ENCODE measurements at regions of chr21 and their contacts with region 1.

Region 1: GRCh38 chr21:36297921-36298594 is 21.9 kb upstream of the MORC3 start:
- DNase-seq: peak; percentile 35 to 89 (median 87)
- ATAC-seq: peak; percentile 99
- H3K4me3 ChIP-seq: peak overlapping the region; percentile 52
- H3K4me3 Mint-ChIP-seq: peak overlapping the region; percentile 71 to 88 (median 84)
- H3K27ac ChIP-seq: peak overlapping the region; percentile 84
- H3K27ac Mint-ChIP-seq: peak overlapping the region; percentile 91 to 100 (median 98)
- H3K4me1 ChIP-seq: peaks cover 21 to 36% of the 10 kb centered on the region in 2 donors
- H3K4me1 Mint-ChIP-seq: peaks cover 24 to 53% (median 40%) of the 10 kb centered on the region in 7 donors
- H3K27me3 ChIP-seq: no peaks in the 10 kb centered on the region
- H3K27me3 Mint-ChIP-seq: no peaks in the 10 kb centered on the region

Region 2: GRCh38 chr21:35896060-35896459 is 402.0 kb before region 1 on chr21:
- CTCF ChIA-PET with region 1: no interaction called
- POLR2A ChIA-PET with region 1: no interaction called
- intact Hi-C with region 1: no loop called
- DNase-seq: no peak
- ATAC-seq: no peak
- H3K4me3 ChIP-seq: no peak overlapping the region
- H3K4me3 Mint-ChIP-seq: no peak overlapping the region
- H3K27ac ChIP-seq: no peak overlapping the region
- H3K27ac Mint-ChIP-seq: no peak overlapping the region
- H3K4me1 ChIP-seq: no peaks in the 10 kb centered on the region
- H3K4me1 Mint-ChIP-seq: peaks cover 0 to 2% (median 0%) of the 10 kb centered on the region in 7 donors
- H3K27me3 ChIP-seq: peaks cover 0 to 3% of the 10 kb centered on the region in 2 donors
- H3K27me3 Mint-ChIP-seq: peaks cover 0 to 16% (median 11%) of the 10 kb centered on the region in 5 donors

Region 3: DNA sequence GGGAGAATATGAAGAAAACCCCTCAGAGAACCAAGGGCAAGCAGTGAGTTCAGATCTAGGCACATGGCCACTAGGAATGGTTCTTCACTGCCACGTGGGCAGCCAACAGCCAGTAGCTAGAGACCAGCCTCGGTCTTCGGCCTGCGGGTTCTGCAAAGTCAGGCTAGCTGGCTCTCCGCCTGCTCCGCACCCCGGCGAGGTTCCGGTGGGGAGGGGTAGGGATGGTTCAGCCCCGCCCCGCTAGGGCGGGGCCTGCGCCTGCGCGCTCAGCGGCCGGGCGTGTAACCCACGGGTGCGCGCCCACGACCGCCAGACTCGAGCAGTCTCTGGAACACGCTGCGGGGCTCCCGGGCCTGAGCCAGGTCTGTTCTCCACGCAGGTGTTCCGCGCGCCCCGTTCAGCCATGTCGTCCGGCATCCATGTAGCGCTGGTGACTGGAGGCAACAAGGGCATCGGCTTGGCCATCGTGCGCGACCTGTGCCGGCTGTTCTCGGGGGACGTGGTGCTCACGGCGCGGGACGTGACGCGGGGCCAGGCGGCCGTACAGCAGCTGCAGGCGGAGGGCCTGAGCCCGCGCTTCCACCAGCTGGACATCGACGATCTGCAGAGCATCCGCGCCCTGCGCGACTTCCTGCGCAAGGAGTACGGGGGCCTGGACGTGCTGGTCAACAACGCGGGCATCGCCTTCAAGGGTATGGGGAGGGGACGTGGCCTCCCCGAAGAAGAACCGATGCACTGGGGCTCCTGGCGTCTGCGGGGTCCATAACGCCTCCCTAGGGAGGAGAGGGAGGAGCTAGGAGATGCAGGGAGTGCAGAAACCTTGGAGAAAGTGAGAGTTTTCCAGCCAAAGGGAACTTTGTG is 228.1 kb before region 1 on chr21 and contains the start of gene CBR1:
- CTCF ChIA-PET with region 1: no interaction called
- POLR2A ChIA-PET with region 1: interaction called, 6 read pairs
- intact Hi-C with region 1: loop called in 1 of 2 experiments (anchors 1 kb)
- DNase-seq: peak; percentile 62 to 90 (median 84)
- ATAC-seq: peak; percentile 98
- H3K4me3 ChIP-seq: peak within 1 kb of the TSS; percentile 73
- H3K4me3 Mint-ChIP-seq: peak within 1 kb of the TSS; percentile 83 to 93 (median 90)
- H3K27ac ChIP-seq: peak within 1 kb of the TSS; percentile 65
- H3K27ac Mint-ChIP-seq: peak within 1 kb of the TSS; percentile 63 to 93 (median 82)
- H3K4me1 ChIP-seq: peaks cover 5 to 21% of the 10 kb centered on the region in 2 donors
- H3K4me1 Mint-ChIP-seq: peaks cover 12 to 47% (median 41%) of the 10 kb centered on the region in 7 donors
- H3K27me3 ChIP-seq: no peaks in the 10 kb centered on the region
- H3K27me3 Mint-ChIP-seq: no peaks in the 10 kb centered on the region
- total RNA-seq, gene CBR1: 6.0 to 51.1 (median 22.1) TPM

Region 4: DNA sequence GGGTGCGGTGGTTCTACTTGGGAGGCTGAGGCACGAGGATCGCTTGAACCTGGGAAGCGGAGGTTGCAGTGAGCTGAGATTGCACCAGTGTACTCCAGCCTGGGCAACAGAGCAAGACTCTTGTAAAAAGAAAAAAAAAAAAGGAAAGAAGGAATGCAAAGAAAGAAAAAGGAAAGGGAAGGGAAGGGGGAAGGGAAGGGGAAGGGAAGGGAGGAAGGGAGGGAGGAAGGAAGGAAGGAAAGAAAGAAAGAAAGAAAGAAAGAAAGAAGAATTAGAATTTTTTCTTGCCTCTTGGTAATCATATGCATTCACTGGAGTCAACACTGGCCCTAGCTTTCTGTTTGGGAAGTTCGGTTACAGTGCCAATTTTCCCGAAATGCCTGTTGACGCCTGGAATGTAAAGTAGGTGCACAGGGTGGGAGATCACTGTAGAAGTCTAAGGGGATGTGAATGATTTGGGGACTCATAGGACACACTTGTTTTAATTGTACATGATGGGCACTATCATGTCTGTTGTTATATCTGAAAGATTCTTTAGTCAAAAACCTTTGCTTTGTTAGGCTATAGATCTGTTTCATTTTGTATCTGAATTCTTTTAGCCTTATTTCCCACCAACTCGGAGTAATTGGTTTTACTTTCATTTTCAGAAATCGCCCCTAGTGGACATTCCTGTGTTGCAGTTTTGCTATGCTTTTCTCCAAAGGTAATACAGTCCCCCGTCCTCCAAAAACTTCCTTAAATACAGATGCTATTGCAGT is 37.8 kb before region 1 on chr21:
- CTCF ChIA-PET with region 1: interaction called, 4 read pairs
- POLR2A ChIA-PET with region 1: interaction called, 8 read pairs
- intact Hi-C with region 1: loop called in 1 of 2 experiments (anchors 1 kb)
- DNase-seq: peak in 7 of 9 donors; percentile 54 to 76 (median 68)
- ATAC-seq: peak; percentile 88
- H3K4me3 ChIP-seq: peak overlapping the region; percentile 57
- H3K4me3 Mint-ChIP-seq: peak overlapping the region; percentile 81 to 91 (median 86)
- H3K27ac ChIP-seq: peak overlapping the region; percentile 76
- H3K27ac Mint-ChIP-seq: peak overlapping the region; percentile 89 to 97 (median 93)
- H3K4me1 ChIP-seq: peaks cover 0 to 6% of the 10 kb centered on the region in 2 donors
- H3K4me1 Mint-ChIP-seq: peaks cover 9 to 24% (median 18%) of the 10 kb centered on the region in 7 donors
- H3K27me3 ChIP-seq: no peaks in the 10 kb centered on the region
- H3K27me3 Mint-ChIP-seq: no peaks in the 10 kb centered on the region

Region 5: GRCh38 chr21:36310016-36310415 is 12.0 kb after region 1 on chr21:
- CTCF ChIA-PET with region 1: interaction called, 4 read pairs
- POLR2A ChIA-PET with region 1: interaction called, 361 read pairs
- intact Hi-C with region 1: loop called (anchors 1 kb)
- DNase-seq: peak in 1 of 9 donors; percentile 25
- ATAC-seq: peak; percentile 83
- H3K4me3 ChIP-seq: no peak overlapping the region
- H3K4me3 Mint-ChIP-seq: peak overlapping the region in 5 of 10 donors; percentile 16 to 49 (median 42)
- H3K27ac ChIP-seq: no peak overlapping the region
- H3K27ac Mint-ChIP-seq: peak overlapping the region in 7 of 9 donors; percentile 32 to 71 (median 60)
- H3K4me1 ChIP-seq: no peaks in the 10 kb centered on the region
- H3K4me1 Mint-ChIP-seq: peaks cover 0 to 9% (median 4%) of the 10 kb centered on the region in 7 donors
- H3K27me3 ChIP-seq: no peaks in the 10 kb centered on the region
- H3K27me3 Mint-ChIP-seq: peaks cover 0 to 2% (median 0%) of the 10 kb centered on the region in 5 donors

Region 6: GRCh38 chr21:36735724-36736325 is 437.8 kb after region 1 on chr21:
- CTCF ChIA-PET with region 1: no interaction called
- POLR2A ChIA-PET with region 1: no interaction called
- intact Hi-C with region 1: no loop called
- DNase-seq: no peak
- ATAC-seq: no peak
- H3K4me3 ChIP-seq: no peak overlapping the region
- H3K4me3 Mint-ChIP-seq: no peak overlapping the region
- H3K27ac ChIP-seq: no peak overlapping the region
- H3K27ac Mint-ChIP-seq: no peak overlapping the region
- H3K4me1 ChIP-seq: no peaks in the 10 kb centered on the region
- H3K4me1 Mint-ChIP-seq: no peaks in the 10 kb centered on the region
- H3K27me3 ChIP-seq: no peaks in the 10 kb centered on the region
- H3K27me3 Mint-ChIP-seq: peaks cover 9 to 46% (median 23%) of the 10 kb centered on the region in 5 donors

Measured in naive thymus-derived CD4-positive, alpha-beta T cell (primary cell).